ENCODE measurements at regions of chr16 and their contacts with region 1.

Region 1: GRCh38 chr16:68328151-68328859 is 17.5 kb downstream of the PRMT7 start:
- DNase-seq: peak; percentile 60 to 88 (median 78)
- ATAC-seq: peak; percentile 99
- H3K4me3 Mint-ChIP-seq: no peak overlapping the region
- H3K27ac Mint-ChIP-seq: peak overlapping the region in 3 of 10 donors; percentile 31 to 67 (median 52)
- H3K4me1 Mint-ChIP-seq: peaks cover 12 to 21% (median 15%) of the 10 kb centered on the region in 4 donors
- H3K27me3 Mint-ChIP-seq: no peaks in the 10 kb centered on the region

Region 2: GRCh38 chr16:68259007-68259825 is 69.1 kb before region 1 on chr16:
- POLR2A ChIA-PET with region 1: interaction called, 40 read pairs
- DNase-seq: no peak
- ATAC-seq: no peak
- H3K4me3 Mint-ChIP-seq: no peak overlapping the region
- H3K27ac Mint-ChIP-seq: peak overlapping the region in 2 of 10 donors; percentile 9 to 27
- H3K4me1 Mint-ChIP-seq: peaks cover 14 to 37% (median 23%) of the 10 kb centered on the region in 4 donors
- H3K27me3 Mint-ChIP-seq: no peaks in the 10 kb centered on the region

Region 3: GRCh38 chr16:68264128-68265077 is 63.9 kb before region 1 on chr16 and contains the start of gene SLC7A6:
- POLR2A ChIA-PET with region 1: interaction called, 40 read pairs
- DNase-seq: peak; percentile 69 to 85 (median 82)
- ATAC-seq: peak; percentile 61 to 75
- H3K4me3 Mint-ChIP-seq: peak within 1 kb of the TSS; percentile 93 to 98 (median 96)
- H3K27ac Mint-ChIP-seq: peak within 1 kb of the TSS; percentile 89 to 99 (median 98)
- H3K4me1 Mint-ChIP-seq: peaks cover 35 to 62% (median 57%) of the 10 kb centered on the region in 4 donors
- H3K27me3 Mint-ChIP-seq: no peaks in the 10 kb centered on the region
- polyA plus RNA-seq, gene SLC7A6: 14.3 to 20.2 (median 19.2) TPM

Region 4: DNA sequence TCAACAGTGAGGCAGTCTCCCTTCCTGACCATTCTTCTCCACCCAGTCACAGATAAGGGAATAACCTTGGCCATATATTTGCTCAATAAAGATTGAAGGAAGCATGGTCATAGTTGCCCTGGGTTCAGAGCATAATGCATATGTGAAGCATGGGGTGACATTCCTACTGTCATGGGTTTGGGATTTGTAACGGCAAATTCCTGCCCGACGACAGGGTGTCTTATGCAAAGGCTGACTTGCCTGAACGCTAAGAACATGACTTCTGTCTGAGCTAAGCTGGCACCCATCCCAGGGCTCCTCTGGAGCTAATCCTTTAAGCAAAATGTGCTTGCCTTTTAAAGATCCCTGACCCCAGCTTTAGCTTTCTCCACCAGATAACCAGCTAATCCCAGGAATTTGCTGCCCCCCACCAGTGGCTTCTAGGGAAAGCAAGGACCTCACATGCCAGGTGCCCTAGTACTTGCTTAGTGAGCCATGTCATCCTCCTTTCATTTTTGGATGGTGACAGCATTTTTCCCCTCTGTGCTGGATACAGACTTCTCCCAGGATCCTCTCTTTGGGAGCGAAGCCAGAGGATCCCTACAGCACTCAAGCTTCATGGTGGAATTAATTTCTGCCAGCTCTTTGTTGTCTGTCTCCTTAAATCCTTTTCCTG is 29.3 kb before region 1 on chr16:
- POLR2A ChIA-PET with region 1: no interaction called
- DNase-seq: peak in 1 of 10 donors; percentile 21
- ATAC-seq: no peak
- H3K4me3 Mint-ChIP-seq: no peak overlapping the region
- H3K27ac Mint-ChIP-seq: peak overlapping the region in 9 of 10 donors; percentile 10 to 82 (median 67)
- H3K4me1 Mint-ChIP-seq: peaks cover 8 to 43% (median 28%) of the 10 kb centered on the region in 4 donors
- H3K27me3 Mint-ChIP-seq: no peaks in the 10 kb centered on the region

Region 5: DNA sequence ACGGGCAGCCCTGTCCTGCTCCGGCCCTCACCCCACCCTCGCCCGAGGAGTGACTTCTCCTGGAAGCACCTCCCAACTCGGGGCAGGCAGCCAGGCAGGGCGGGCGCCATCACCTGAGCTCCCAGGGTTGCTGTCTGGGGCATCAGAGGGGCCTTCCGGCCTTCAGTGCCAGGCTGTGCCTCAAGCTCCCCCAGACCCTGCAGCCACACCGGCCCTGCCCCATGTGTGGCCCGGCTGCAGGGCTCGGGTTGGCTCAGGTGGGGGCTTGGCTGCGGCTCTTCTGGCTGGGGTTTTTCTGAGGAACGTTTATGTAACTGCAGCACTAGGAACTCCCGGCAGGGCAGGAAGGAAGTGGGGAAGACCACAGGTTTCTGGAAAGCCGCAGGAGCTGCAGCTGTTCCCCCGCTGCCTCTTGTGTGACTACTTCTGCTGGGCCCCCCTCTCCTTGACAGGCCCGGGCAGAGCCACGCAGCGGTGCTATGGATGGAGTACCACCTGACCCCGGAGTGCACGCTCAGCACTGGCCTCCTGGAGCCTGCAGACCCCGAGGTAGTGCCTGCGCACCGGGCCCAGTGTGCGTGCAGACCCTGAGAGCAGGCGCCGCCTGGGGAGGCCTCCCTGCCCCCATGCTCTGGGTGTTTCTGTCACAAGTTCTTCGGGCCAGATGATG is 28.1 kb after region 1 on chr16:
- POLR2A ChIA-PET with region 1: no interaction called
- DNase-seq: peak; percentile 42 to 84 (median 71)
- ATAC-seq: peak; percentile 89 to 90
- H3K4me3 Mint-ChIP-seq: peak overlapping the region; percentile 63 to 89 (median 79)
- H3K27ac Mint-ChIP-seq: peak overlapping the region in 7 of 10 donors; percentile 3 to 89 (median 60)
- H3K4me1 Mint-ChIP-seq: peaks cover 19 to 47% (median 39%) of the 10 kb centered on the region in 4 donors
- H3K27me3 Mint-ChIP-seq: no peaks in the 10 kb centered on the region